ENCODE measurements at regions of chr5 and their contacts with region 1.

Region 1: DNA sequence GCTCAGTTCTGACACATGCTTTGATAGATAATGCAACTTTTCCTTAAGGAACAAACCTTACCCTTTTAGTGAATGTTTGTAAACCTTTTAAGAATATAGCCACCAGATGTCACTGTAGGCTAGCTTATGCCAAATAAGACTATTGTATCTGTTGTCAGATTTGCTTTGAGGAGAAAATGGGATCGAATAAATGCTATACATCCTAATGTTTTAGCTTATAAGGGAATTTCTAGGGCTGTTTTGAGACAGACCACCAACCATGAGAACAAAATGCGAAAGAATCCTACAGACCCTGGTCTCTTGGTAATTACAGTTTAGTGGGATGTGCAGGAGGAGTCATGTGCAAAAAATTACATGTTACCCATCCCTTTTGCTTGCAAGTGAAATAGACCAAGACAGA is 127.6 kb upstream of the NMUR2 start:
- DNase-seq: no peak
- H3K4me3 ChIP-seq: peak overlapping the region in 29 of 59 donors; percentile 3 to 48 (median 29)
- H3K27ac ChIP-seq: peak overlapping the region in 7 of 59 donors; percentile 10 to 43 (median 32)
- H3K27me3 ChIP-seq: no peaks in the 10 kb centered on the region
- CTCF ChIP-seq: peak; percentile 14 to 89 (median 73)

Region 2: DNA sequence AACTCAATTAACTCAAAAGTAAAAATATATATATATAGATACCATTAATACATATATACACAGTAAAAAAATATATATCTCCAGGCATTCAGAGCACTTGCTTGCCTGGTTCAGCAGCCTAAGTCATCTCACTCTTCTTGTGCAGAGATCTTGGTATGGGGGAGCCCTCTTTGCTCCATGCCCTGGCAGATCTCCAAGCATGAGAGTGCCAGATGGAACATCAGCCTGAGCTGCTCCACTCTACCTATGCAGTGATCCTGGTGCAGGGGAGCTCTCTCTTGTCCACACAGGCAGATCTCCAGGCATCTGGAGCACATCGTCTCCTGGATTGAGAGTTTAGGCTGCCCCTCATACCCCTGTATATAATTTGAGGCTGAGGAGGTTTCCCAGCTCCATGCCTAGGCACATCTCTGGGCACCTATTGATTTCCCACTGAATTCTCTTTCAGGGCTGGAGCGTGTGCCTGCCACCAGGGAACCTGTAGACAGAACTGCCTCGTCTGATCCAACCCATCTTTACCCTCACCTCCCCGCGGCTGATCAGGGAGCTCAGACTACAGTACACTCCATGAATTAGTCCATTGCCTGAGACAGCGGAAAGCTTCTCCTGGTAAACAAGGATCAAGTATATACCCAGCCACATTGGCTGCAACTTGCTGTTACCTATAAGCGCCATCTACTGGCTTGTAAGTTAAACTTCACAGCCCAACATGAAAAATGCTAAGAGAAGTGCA is 615.3 kb after region 1 on chr5:
- intact Hi-C with region 1: loop called (anchors 5 kb)
- DNase-seq: no peak
- H3K4me3 ChIP-seq: no peak overlapping the region
- H3K27ac ChIP-seq: no peak overlapping the region
- H3K27me3 ChIP-seq: no peaks in the 10 kb centered on the region
- CTCF ChIP-seq: peak in 55 of 56 donors; percentile 13 to 75 (median 55)

Region 3: GRCh38 chr5:153964880-153965645 is 1432.3 kb after region 1 on chr5:
- intact Hi-C with region 1: loop called (anchors 2 kb)
- DNase-seq: peak in 6 of 10 donors; percentile 17 to 66 (median 52)
- H3K4me3 ChIP-seq: peak overlapping the region in 52 of 59 donors; percentile 9 to 61 (median 44)
- H3K27ac ChIP-seq: peak overlapping the region in 1 of 59 donors; percentile 18
- H3K27me3 ChIP-seq: peaks cover 0 to 3% (median 0%) of the 10 kb centered on the region in 45 donors
- CTCF ChIP-seq: peak; percentile 74 to 97 (median 89)

Measured in dorsolateral prefrontal cortex (tissue), 120 donors.